PC-3 (cell line): ENCODE measurements at regions of chr10 and their contacts with region 1.

Region 1: DNA sequence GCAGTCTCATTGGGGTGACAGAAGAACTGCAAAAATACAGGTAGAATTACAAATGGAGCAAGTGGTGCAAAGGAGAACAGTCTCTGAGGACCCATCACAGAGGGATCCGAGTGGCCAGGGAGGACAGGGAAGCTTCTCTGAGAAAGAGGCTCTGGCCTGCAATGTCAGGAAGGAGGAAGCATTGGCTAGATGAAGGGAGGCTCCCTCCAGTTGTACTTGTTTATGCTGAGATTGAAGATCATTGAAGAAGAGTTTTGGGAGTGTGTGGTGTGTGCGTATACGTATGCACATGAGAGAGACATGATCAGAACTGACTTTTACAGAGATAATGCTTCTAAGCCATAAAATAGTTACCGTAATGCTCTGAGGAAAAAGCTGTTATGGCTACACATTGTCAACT is 274.7 kb upstream of the FZD8 start:
- DNase-seq: peak; percentile 64
- ATAC-seq: peak; percentile 21
- H3K4me3 ChIP-seq: no peak overlapping the region
- H3K27ac ChIP-seq: no peak overlapping the region
- H3K4me1 ChIP-seq: peaks cover 22% of the 10 kb centered on the region
- H3K27me3 ChIP-seq: no peaks in the 10 kb centered on the region
- CTCF ChIP-seq: peak; percentile 68

Region 2: DNA sequence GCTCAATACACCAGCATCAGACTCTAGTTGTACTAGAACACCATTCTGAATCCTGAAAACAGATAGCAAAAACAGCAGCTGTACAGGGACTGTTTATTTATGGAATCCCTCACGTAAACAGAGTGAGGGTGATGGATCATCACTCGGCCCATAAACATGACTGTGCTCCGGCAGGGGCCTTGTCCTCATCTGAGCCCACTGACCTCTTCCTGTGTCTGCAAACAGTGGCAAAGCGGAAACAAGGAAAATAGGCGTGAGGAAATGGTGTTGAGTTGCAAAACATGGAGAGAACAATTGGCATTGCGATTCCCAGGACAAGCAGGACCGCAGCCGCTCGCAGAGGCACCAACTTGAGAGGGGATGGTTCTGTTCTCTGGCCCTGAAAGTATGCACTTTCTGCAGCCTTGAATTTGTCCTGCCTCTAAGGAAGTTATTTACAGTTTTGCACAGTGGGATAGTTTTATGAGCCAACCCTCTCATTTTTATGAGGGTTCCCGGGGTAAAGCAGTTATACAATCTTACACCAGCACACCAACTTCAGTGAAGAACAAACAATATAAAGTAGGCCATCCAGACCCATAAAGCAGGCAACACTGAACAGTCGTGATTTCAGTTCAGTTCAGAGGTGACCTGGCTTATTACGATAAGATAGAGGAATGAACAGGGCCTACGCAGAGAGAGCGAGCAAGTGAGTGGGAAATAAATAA is 26.7 kb before region 1 on chr10:
- CTCF ChIA-PET with region 1: no interaction called
- POLR2A ChIA-PET with region 1: no interaction called
- intact Hi-C with region 1: loop called (anchors 1 kb)
- DNase-seq: peak; percentile 74
- ATAC-seq: peak; percentile 90
- H3K4me3 ChIP-seq: no peak overlapping the region
- H3K27ac ChIP-seq: peak overlapping the region; percentile 38
- H3K4me1 ChIP-seq: peaks cover 25% of the 10 kb centered on the region
- H3K27me3 ChIP-seq: no peaks in the 10 kb centered on the region
- CTCF ChIP-seq: no peak

Region 3: DNA sequence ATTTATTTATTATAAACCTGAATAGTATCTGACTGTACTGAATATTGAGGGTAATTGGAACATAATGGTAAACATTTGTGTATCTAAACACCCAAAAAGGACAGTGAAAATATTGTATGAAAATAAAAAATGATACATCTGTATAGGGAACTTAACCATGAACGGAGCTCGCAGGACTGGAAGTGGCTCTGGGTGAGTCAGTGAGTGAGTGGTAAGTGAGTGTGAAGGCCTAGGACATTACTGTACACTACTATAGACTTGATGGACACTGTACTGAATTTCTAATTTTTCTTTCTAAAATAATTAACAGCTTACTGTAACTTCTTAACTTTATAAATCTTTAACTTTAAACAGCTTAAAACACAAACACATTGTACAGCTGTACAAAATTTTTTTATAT is 179.8 kb after region 1 on chr10:
- CTCF ChIA-PET with region 1: no interaction called
- POLR2A ChIA-PET with region 1: no interaction called
- intact Hi-C with region 1: loop called (anchors 5 kb)
- DNase-seq: peak; percentile 97
- ATAC-seq: peak; percentile 71
- H3K4me3 ChIP-seq: no peak overlapping the region
- H3K27ac ChIP-seq: peak overlapping the region; percentile 58
- H3K4me1 ChIP-seq: peaks cover 29% of the 10 kb centered on the region
- H3K27me3 ChIP-seq: no peaks in the 10 kb centered on the region
- CTCF ChIP-seq: no peak

Region 4: GRCh38 chr10:36393801-36394200 is 477.0 kb after region 1 on chr10:
- CTCF ChIA-PET with region 1: no interaction called
- POLR2A ChIA-PET with region 1: no interaction called
- intact Hi-C with region 1: loop called (anchors 5 kb)
- DNase-seq: peak; percentile 99
- ATAC-seq: peak; percentile 88
- H3K4me3 ChIP-seq: no peak overlapping the region
- H3K27ac ChIP-seq: peak overlapping the region; percentile 21
- H3K4me1 ChIP-seq: peaks cover 13% of the 10 kb centered on the region
- H3K27me3 ChIP-seq: no peaks in the 10 kb centered on the region
- CTCF ChIP-seq: no peak

Region 5: DNA sequence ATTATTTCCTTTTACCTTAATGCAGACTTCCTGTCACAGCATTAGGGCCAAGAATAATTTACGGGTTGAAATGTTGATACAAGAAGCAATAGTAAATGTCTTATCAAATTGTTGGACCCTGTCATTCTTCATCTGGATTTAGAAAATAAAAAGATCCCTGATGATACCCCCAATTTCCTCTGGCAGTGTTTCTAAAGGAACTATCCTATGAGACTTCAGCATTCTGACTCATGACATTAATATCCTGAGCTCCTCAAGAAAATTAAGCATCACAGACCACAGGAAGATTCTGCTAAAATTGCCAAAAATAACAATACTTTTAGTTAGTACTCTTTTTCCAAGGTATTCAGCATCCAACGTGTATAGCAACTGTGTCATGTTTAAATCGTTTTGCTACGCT is 718.1 kb after region 1 on chr10:
- CTCF ChIA-PET with region 1: no interaction called
- POLR2A ChIA-PET with region 1: no interaction called
- intact Hi-C with region 1: loop called (anchors 10 kb)
- DNase-seq: peak; percentile 82
- ATAC-seq: peak; percentile 45
- H3K4me3 ChIP-seq: no peak overlapping the region
- H3K27ac ChIP-seq: peak overlapping the region; percentile 52
- H3K4me1 ChIP-seq: peaks cover 36% of the 10 kb centered on the region
- H3K27me3 ChIP-seq: no peaks in the 10 kb centered on the region
- CTCF ChIP-seq: no peak